ENCODE measurements at regions of chr7 and their contacts with region 1.

Region 1: DNA sequence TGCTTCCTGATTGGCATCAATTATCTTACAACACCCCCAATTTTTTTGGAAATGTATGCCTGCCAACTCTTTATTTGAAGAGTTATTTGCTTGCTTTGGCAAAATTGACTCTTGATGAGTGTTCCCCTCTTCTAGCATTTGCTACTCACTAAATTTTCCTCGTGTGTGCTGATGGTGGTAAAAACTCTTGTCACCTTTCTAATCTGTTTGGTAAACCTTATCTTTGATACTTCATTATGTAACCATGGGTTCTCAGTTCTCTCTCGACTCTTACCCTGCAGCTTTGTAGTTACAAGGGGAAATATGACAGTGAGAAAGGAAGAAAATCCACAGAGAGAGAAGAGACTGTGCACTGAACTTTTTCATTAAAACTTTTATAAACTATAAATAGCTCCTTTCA is 102.5 kb downstream of the CDK14 start:
- DNase-seq: no peak
- H3K4me3 ChIP-seq: no peak overlapping the region
- H3K27ac ChIP-seq: no peak overlapping the region
- H3K27me3 ChIP-seq: no peaks in the 10 kb centered on the region
- CTCF ChIP-seq: no peak

Region 2: DNA sequence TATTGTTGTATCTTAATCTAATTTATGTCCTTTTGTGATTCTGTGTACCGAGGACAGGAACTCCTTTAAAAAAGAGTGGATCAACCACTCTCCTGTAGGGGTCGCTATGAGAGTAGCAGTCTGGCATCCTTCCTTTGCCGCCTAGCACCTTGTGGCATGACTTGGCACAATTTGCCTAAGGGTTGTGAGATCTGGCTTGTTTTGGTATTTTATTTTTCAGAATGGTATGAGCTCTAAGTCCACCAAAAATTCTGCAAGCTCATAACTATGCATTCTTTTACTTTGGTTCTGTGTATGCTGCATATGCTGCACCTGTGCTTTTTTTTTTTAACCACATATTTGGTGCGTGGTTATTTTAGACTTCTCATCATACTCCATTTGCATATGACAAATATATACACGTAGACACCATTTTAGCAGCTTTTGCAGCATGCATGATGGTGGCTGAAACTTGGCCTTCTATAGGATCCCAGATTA is 10.3 kb after region 1 on chr7:
- CTCF ChIA-PET with region 1: interaction called, 12 read pairs
- POLR2A ChIA-PET with region 1: no interaction called
- DNase-seq: no peak
- H3K4me3 ChIP-seq: no peak overlapping the region
- H3K27ac ChIP-seq: no peak overlapping the region
- H3K27me3 ChIP-seq: no peaks in the 10 kb centered on the region
- CTCF ChIP-seq: peak; percentile 45

Measured in AG04450 (cell line).